Activated B cell treated with CpG ODN at 0.5 μM for 24 hours (primary cell): ENCODE measurements at regions of chr9 and their contacts with region 1.

Region 1: DNA sequence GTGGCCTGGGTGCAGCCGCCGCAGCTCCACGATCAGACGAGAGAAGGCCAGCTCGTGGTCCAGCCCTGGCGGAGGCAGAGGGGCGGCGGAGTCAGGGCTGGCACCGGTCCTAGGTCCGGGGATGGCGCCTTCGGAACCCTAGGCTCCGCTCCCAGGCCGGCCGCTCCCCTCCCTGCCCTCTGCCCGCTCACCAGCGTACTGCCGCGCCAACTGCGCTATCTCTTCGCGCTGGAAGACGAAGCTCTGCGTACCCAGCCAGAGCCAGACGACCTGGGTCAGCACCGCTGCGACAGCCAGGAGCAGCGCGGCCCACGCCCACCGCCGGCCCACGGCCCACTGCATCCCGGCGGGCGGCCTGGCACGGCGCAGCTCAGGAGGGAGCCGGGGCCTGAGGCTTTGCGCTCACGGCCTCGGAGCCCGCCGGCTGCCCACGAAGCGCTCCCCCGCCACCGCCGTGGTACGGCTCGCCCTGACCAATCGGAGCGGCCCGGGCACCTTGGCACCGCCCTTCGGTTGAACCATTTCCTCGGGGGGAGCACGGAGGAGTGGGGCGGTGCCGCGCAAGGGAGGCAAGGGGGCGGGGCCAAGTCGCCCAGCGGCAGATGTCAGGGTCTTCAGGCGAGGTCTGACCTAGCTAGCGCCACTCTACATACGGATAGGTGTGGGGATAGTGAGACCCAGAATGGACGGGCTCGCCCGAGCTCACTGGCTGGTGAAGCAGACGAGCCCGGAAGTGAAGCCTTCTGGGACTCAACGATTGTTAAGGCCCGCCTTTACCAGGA is at the start of gene SIGMAR1:
- DNase-seq: peak; percentile 93
- ATAC-seq: peak; percentile 95
- H3K4me3 Mint-ChIP-seq: peak within 1 kb of the TSS; percentile 87
- H3K27ac Mint-ChIP-seq: peak within 1 kb of the TSS; percentile 78
- H3K4me1 Mint-ChIP-seq: peaks cover 29% of the 10 kb centered on the region
- H3K27me3 Mint-ChIP-seq: no peaks in the 10 kb centered on the region
- CTCF ChIP-seq: no peak
- total RNA-seq, gene SIGMAR1: 27.2 TPM in 2 replicates

Region 2: GRCh38 chr9:34403554-34404380 is 233.8 kb before region 1 on chr9:
- CTCF ChIA-PET with region 1: interaction called, 9 read pairs
- POLR2A ChIA-PET with region 1: no interaction called
- intact Hi-C with region 1: loop called (anchors 1 kb)
- DNase-seq: no peak
- ATAC-seq: peak; percentile 56
- H3K4me3 Mint-ChIP-seq: no peak overlapping the region
- H3K27ac Mint-ChIP-seq: no peak overlapping the region
- H3K4me1 Mint-ChIP-seq: no peaks in the 10 kb centered on the region
- H3K27me3 Mint-ChIP-seq: no peaks in the 10 kb centered on the region
- CTCF ChIP-seq: peak; percentile 99

Region 3: GRCh38 chr9:34458013-34458958 is 179.3 kb before region 1 on chr9 and contains the starts of genes DNAI1 and FAM219A:
- CTCF ChIA-PET with region 1: interaction called, 3 read pairs
- POLR2A ChIA-PET with region 1: interaction called, 4 read pairs
- intact Hi-C with region 1: loop called (anchors 1 kb)
- DNase-seq: peak; percentile 99
- ATAC-seq: peak; percentile 92
- H3K4me3 Mint-ChIP-seq: peak within 1 kb of the TSS; percentile 90
- H3K27ac Mint-ChIP-seq: peak within 1 kb of the TSS; percentile 68
- H3K4me1 Mint-ChIP-seq: peaks cover 34% of the 10 kb centered on the region
- H3K27me3 Mint-ChIP-seq: peaks cover 12% of the 10 kb centered on the region
- CTCF ChIP-seq: no peak
- total RNA-seq, gene DNAI1: not detected in 2 replicates
- total RNA-seq, gene FAM219A: 13.5 and 16.9 TPM in 2 replicates

Region 4: DNA sequence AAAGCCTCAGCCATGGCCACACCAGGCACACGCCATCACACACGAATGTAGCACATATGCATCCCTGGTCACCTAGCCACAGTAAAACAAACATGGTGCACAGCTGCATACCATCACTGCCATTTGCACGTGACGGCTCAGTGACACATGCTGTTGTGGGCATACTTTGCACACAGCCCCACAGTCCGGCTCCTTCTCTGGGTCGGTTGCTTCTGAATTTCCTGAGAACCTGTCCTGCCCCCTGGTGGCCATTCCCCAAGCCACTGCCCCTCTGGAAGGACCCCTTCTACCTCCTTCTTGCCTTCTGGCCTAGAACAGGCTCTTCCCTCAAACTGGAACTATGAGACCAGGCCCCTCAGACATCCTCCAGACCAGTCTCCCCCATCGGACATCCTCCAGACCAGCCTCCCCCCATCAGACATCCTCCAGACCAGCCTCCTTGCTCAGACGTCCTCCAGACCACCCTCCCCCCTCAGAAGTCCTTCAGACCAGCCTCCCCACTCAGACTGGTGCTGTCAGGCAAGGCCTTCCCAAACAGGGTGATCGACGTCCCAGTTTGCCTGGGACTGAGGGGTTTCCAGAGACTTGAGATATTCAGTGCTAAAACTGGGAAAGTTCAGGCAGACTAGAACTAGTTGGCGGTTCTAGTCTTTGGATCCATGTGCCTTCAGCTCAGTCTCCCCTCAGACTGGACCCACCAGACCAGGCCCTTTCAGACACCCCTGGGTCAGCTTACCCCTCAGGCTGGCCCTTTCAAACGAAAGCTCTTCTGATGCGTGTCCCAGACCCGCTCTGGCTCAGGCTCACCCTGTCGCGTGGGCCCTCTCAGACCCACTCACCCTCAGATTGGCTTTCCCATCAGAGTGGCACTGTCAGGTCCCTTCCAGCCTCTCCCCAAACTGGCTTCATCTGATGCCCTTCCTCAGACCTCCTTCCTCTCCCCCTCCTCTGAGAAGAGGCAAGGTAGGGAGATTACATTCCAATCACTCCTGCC is 90.4 kb before region 1 on chr9:
- CTCF ChIA-PET with region 1: interaction called, 10 read pairs
- POLR2A ChIA-PET with region 1: no interaction called
- intact Hi-C with region 1: loop called (anchors 1 kb)
- DNase-seq: no peak
- ATAC-seq: peak; percentile 58
- H3K4me3 Mint-ChIP-seq: no peak overlapping the region
- H3K27ac Mint-ChIP-seq: no peak overlapping the region
- H3K4me1 Mint-ChIP-seq: no peaks in the 10 kb centered on the region
- H3K27me3 Mint-ChIP-seq: peaks cover 29% of the 10 kb centered on the region
- CTCF ChIP-seq: no peak

Region 5: DNA sequence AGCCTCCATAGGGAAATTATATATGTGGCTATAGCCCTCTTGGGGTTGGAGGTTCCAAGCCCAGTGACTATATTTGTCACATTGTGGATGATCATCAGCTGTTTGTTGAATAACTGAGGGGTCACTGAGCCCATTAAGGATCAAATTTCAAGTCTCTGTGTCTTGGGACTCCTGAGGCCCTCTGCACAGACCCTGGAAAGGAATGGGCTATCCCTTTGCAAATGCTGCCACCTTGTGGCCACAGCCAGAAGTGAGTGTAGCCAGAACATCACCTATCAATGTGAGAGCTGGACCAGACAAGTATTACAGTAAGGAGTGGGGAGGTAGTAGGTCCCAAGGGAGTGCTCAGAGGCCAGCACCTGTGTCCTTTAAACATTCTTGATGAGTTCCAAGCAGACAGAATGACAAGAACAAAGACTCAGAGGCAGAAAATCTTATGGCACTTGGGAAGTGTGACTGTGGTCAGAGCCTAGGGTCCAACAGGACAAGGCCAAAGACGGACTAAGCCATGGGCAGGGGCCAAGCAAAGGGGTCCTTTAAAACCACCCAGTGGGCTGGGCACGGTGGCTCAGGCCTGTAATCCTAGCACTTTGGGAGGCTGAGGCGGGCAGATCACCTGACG is 33.8 kb before region 1 on chr9:
- CTCF ChIA-PET with region 1: interaction called, 18 read pairs
- POLR2A ChIA-PET with region 1: no interaction called
- intact Hi-C with region 1: no loop called
- DNase-seq: peak; percentile 75
- ATAC-seq: peak; percentile 97
- H3K4me3 Mint-ChIP-seq: no peak overlapping the region
- H3K27ac Mint-ChIP-seq: no peak overlapping the region
- H3K4me1 Mint-ChIP-seq: no peaks in the 10 kb centered on the region
- H3K27me3 Mint-ChIP-seq: peaks cover 9% of the 10 kb centered on the region
- CTCF ChIP-seq: peak; percentile 52

Region 6: GRCh38 chr9:34620061-34620994 is 17.2 kb before region 1 on chr9 and contains the start of gene DCTN3:
- CTCF ChIA-PET with region 1: interaction called, 62 read pairs
- POLR2A ChIA-PET with region 1: interaction called, 44 read pairs
- intact Hi-C with region 1: loop called (anchors 1 kb)
- DNase-seq: peak; percentile 69
- ATAC-seq: peak; percentile 98
- H3K4me3 Mint-ChIP-seq: peak within 1 kb of the TSS; percentile 95
- H3K27ac Mint-ChIP-seq: peak within 1 kb of the TSS; percentile 73
- H3K4me1 Mint-ChIP-seq: peaks cover 29% of the 10 kb centered on the region
- H3K27me3 Mint-ChIP-seq: peaks cover 30% of the 10 kb centered on the region
- CTCF ChIP-seq: no peak
- total RNA-seq, gene DCTN3: 63.9 and 64.3 TPM in 2 replicates

Region 7: GRCh38 chr9:34701769-34702736 is 64.5 kb after region 1 on chr9:
- CTCF ChIA-PET with region 1: interaction called, 3 read pairs
- POLR2A ChIA-PET with region 1: no interaction called
- intact Hi-C with region 1: loop called (anchors 2 kb)
- DNase-seq: peak; percentile 68
- ATAC-seq: peak; percentile 82
- H3K4me3 Mint-ChIP-seq: peak overlapping the region; percentile 73
- H3K27ac Mint-ChIP-seq: no peak overlapping the region
- H3K4me1 Mint-ChIP-seq: peaks cover 8% of the 10 kb centered on the region
- H3K27me3 Mint-ChIP-seq: peaks cover 20% of the 10 kb centered on the region
- CTCF ChIP-seq: peak; percentile 27

Region 8: DNA sequence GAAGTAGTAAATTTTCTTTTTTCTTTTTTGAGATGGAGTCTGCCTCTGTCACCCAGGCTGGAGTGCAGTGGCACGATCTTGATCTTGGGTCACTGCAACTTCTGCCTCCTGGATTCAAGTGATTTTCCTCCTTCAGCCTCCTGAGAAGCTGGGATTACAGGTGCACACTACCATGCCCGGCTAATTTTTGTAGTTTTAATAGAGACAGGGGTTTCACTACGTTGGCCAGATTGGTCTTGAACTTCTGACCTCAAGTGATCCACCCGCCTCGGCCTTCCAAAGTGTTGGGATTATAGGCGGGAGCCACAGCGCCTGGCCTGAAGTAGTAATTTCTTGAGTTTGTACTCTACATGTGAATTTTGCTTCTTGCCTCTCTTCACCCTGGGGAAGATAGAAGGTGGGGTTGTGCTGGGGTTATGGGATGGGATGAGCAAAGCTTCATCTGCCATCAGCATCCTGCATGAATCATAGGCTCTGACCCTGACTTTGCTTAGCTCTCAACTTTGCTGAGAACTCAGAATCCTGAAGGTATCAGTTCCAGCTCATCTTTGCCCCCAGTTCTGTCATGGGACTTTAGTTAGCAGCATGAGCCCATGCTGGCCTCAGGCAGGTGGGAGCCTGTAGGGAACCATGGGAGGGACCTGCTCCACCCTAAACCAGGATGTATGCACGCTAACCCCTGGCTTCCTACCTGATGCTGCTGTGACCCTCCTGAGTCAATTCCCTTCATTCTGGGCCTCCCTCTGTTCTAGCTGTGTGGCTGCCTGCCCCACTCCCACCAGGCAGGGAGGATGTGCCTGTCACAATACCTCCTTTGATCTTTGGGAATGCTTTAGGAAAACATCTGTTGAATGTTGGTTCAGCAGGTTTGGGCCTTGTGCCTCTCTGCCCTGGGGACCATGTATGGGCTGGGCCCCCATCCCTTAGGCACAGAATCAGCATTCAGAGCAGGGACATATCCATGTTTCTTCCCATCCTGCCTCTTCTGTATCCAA is 81.8 kb after region 1 on chr9:
- CTCF ChIA-PET with region 1: no interaction called
- POLR2A ChIA-PET with region 1: no interaction called
- intact Hi-C with region 1: no loop called
- DNase-seq: no peak
- ATAC-seq: no peak
- H3K4me3 Mint-ChIP-seq: no peak overlapping the region
- H3K27ac Mint-ChIP-seq: no peak overlapping the region
- H3K4me1 Mint-ChIP-seq: no peaks in the 10 kb centered on the region
- H3K27me3 Mint-ChIP-seq: peaks cover 11% of the 10 kb centered on the region
- CTCF ChIP-seq: no peak

Region 9: GRCh38 chr9:35972093-35972492 is 1334.5 kb after region 1 on chr9:
- CTCF ChIA-PET with region 1: no interaction called
- POLR2A ChIA-PET with region 1: no interaction called
- intact Hi-C with region 1: no loop called
- DNase-seq: no peak
- ATAC-seq: no peak
- H3K4me3 Mint-ChIP-seq: no peak overlapping the region
- H3K27ac Mint-ChIP-seq: no peak overlapping the region
- H3K4me1 Mint-ChIP-seq: peaks cover 16% of the 10 kb centered on the region
- H3K27me3 Mint-ChIP-seq: peaks cover 60% of the 10 kb centered on the region
- CTCF ChIP-seq: no peak